Uterus (tissue), 4 donors: ENCODE measurements at regions of chr5 and their contacts with region 1.

Region 1: DNA sequence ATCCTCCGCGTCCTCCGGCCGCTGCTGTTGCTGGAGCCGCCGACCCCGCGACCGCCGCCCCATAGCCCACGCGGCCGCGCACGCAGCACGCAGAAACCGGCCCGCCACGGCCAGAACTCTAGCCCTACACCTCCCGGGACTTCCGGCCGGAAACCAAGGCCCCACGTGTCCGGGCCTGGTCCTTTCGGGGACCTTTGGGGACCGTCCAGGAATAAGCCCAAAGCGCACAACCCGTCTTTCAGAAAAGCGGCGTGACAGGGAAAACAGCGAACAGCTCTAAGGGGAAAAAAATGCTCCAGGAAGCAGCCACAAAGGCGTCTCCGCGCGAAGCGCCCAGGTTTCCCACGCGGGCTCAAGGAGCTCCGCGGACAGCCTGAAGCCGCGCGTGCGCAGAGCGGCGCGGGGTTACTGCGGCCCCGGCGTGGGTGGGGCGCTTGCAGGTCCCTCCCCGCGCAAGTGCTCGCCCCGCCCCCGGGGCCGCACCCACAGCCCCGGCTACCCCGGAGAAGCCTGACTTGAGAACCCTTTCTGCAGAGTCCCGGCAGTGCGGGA is at the starts of genes NSUN2 and SRD5A1:
- DNase-seq: peak; percentile 88 to 89
- H3K4me3 ChIP-seq: peak within 1 kb of the TSS; percentile 69 to 87
- H3K27ac ChIP-seq: peak within 1 kb of the TSS; percentile 83 to 90
- H3K4me1 ChIP-seq: peaks cover 4 to 10% of the 10 kb centered on the region in 2 donors
- H3K27me3 ChIP-seq: no peaks in the 10 kb centered on the region
- CTCF ChIP-seq: no peak
- POLR2A ChIP-seq: peak; percentile 31 to 42
- total RNA-seq, gene NSUN2: 38.9 to 51.2 (median 50.6) TPM
- total RNA-seq, gene SRD5A1: 0.29 to 71.2 (median 10.1) TPM

Region 2: GRCh38 chr5:6712577-6713275 is 79.7 kb after region 1 on chr5:
- intact Hi-C with region 1: loop called (anchors 5 kb)
- DNase-seq: peak; percentile 96 to 97
- H3K4me3 ChIP-seq: peak overlapping the region; percentile 59 to 69
- H3K27ac ChIP-seq: peak overlapping the region; percentile 95 to 97
- H3K4me1 ChIP-seq: peaks cover 3 to 11% of the 10 kb centered on the region in 2 donors
- H3K27me3 ChIP-seq: no peaks in the 10 kb centered on the region
- CTCF ChIP-seq: peak in 3 of 4 experiments; percentile 9 to 40 (median 10)
- POLR2A ChIP-seq: peak; percentile 56 to 82